ENCODE measurements at regions of chr6 and their contacts with region 1.

Region 1: GRCh38 chr6:10030942-10031537 is 383.8 kb downstream of the TFAP2A start:
- DNase-seq: no peak
- H3K4me3 ChIP-seq: no peak overlapping the region
- H3K27ac ChIP-seq: no peak overlapping the region
- H3K4me1 ChIP-seq: no peaks in the 10 kb centered on the region
- H3K27me3 ChIP-seq: no peaks in the 10 kb centered on the region
- CTCF ChIP-seq: peak in 4 of 5 experiments; percentile 38 to 54 (median 50)
- EP300 ChIP-seq: no peak
- POLR2A ChIP-seq: no peak

Region 2: GRCh38 chr6:10014557-10014956 is 16.5 kb before region 1 on chr6:
- in situ Hi-C with region 1: no loop called
- intact Hi-C with region 1: no loop called
- DNase-seq: no peak
- H3K4me3 ChIP-seq: no peak overlapping the region
- H3K27ac ChIP-seq: no peak overlapping the region
- H3K4me1 ChIP-seq: no peaks in the 10 kb centered on the region
- H3K27me3 ChIP-seq: no peaks in the 10 kb centered on the region
- CTCF ChIP-seq: no peak
- EP300 ChIP-seq: no peak
- POLR2A ChIP-seq: no peak

Region 3: DNA sequence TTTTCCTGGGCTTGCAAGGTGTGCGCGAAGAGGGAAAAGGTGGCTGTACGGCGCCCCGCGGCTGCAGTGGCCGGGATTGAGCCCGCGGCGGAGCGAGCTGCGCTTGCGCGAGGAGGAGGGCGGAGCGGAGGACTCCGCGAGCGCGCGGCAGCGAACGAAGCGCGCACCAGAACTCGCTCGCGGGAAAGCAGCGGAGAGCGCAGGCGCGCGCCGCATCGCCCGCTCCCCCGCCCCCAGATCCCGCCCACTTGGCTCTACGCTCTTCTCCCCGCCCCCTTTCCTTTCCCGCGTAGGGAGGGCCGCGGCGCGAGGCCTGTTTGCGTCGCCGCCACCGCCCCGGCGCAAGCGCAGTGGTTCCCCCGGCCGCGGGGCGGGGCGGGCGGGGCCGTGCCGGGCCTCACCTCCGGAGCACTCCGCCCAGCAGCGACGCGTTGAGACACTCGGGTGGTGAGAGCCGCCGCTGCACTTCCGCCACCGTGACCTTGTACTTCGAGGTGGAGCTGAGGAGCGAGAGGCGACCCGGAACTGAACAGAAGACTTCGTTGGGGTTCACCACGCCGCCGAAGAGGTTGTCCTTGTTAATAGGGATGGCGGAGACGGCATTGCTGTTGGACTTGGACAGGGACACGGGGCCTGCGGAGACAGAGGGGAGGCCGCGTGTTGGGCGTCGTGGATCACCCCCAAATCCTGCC is 373.2 kb after region 1 on chr6:
- in situ Hi-C with region 1: loop called in 1 of 4 experiments (anchors 25 kb)
- intact Hi-C with region 1: no loop called
- DNase-seq: peak; percentile 90
- H3K4me3 ChIP-seq: peak overlapping the region; percentile 40 to 61 (median 51)
- H3K27ac ChIP-seq: peak overlapping the region; percentile 44 to 71 (median 51)
- H3K4me1 ChIP-seq: peaks cover 8 to 15% (median 11%) of the 10 kb centered on the region in 4 donors
- H3K27me3 ChIP-seq: peaks cover 89% of the 10 kb centered on the region
- CTCF ChIP-seq: peak; percentile 6 to 41 (median 37)
- EP300 ChIP-seq: no peak
- POLR2A ChIP-seq: no peak

Measured in transverse colon (tissue), 4 donors.